ENCODE measurements at regions of chr3 and their contacts with region 1.

Region 1: GRCh38 chr3:40179016-40179415 is 130.5 kb upstream of the EIF1B start:
- DNase-seq: peak; percentile 22
- ATAC-seq: no peak
- H3K4me3 Mint-ChIP-seq: no peak overlapping the region
- H3K27ac Mint-ChIP-seq: no peak overlapping the region
- H3K4me1 Mint-ChIP-seq: no peaks in the 10 kb centered on the region
- H3K27me3 Mint-ChIP-seq: no peaks in the 10 kb centered on the region
- CTCF ChIP-seq: no peak

Region 2: GRCh38 chr3:39447637-39448483 is 731.2 kb before region 1 on chr3:
- CTCF ChIA-PET with region 1: interaction called, 8 read pairs
- POLR2A ChIA-PET with region 1: no interaction called
- intact Hi-C with region 1: loop called (anchors 1 kb)
- DNase-seq: no peak
- ATAC-seq: peak; percentile 57
- H3K4me3 Mint-ChIP-seq: no peak overlapping the region
- H3K27ac Mint-ChIP-seq: no peak overlapping the region
- H3K4me1 Mint-ChIP-seq: no peaks in the 10 kb centered on the region
- H3K27me3 Mint-ChIP-seq: peaks cover 6% of the 10 kb centered on the region
- CTCF ChIP-seq: peak; percentile 71

Region 3: GRCh38 chr3:39707314-39707909 is 471.6 kb before region 1 on chr3:
- CTCF ChIA-PET with region 1: no interaction called
- POLR2A ChIA-PET with region 1: no interaction called
- intact Hi-C with region 1: loop called (anchors 1 kb)
- DNase-seq: no peak
- ATAC-seq: no peak
- H3K4me3 Mint-ChIP-seq: no peak overlapping the region
- H3K27ac Mint-ChIP-seq: no peak overlapping the region
- H3K4me1 Mint-ChIP-seq: no peaks in the 10 kb centered on the region
- H3K27me3 Mint-ChIP-seq: peaks cover 4% of the 10 kb centered on the region
- CTCF ChIP-seq: peak; percentile 33

Region 4: GRCh38 chr3:39724233-39724846 is 454.7 kb before region 1 on chr3:
- CTCF ChIA-PET with region 1: no interaction called
- POLR2A ChIA-PET with region 1: no interaction called
- intact Hi-C with region 1: loop called (anchors 5 kb)
- DNase-seq: no peak
- ATAC-seq: no peak
- H3K4me3 Mint-ChIP-seq: no peak overlapping the region
- H3K27ac Mint-ChIP-seq: no peak overlapping the region
- H3K4me1 Mint-ChIP-seq: no peaks in the 10 kb centered on the region
- H3K27me3 Mint-ChIP-seq: peaks cover 5% of the 10 kb centered on the region
- CTCF ChIP-seq: no peak

Region 5: GRCh38 chr3:40109641-40110490 is 69.2 kb before region 1 on chr3:
- CTCF ChIA-PET with region 1: no interaction called
- POLR2A ChIA-PET with region 1: no interaction called
- intact Hi-C with region 1: no loop called
- DNase-seq: no peak
- ATAC-seq: no peak
- H3K4me3 Mint-ChIP-seq: no peak overlapping the region
- H3K27ac Mint-ChIP-seq: no peak overlapping the region
- H3K4me1 Mint-ChIP-seq: no peaks in the 10 kb centered on the region
- H3K27me3 Mint-ChIP-seq: no peaks in the 10 kb centered on the region
- CTCF ChIP-seq: no peak

Region 6: GRCh38 chr3:40278791-40279190 is 99.8 kb after region 1 on chr3:
- CTCF ChIA-PET with region 1: no interaction called
- POLR2A ChIA-PET with region 1: no interaction called
- intact Hi-C with region 1: no loop called
- DNase-seq: no peak
- ATAC-seq: no peak
- H3K4me3 Mint-ChIP-seq: no peak overlapping the region
- H3K27ac Mint-ChIP-seq: no peak overlapping the region
- H3K4me1 Mint-ChIP-seq: no peaks in the 10 kb centered on the region
- H3K27me3 Mint-ChIP-seq: peaks cover 4% of the 10 kb centered on the region
- CTCF ChIP-seq: no peak